Activated CD8-positive, alpha-beta T cell treated with anti-CD3 and anti-CD28 coated beads, Interleukin-2, amount 10 ng/mL, durations not matched to agents 7 days and 5 days (primary cell): ENCODE measurements at regions of chr3 and their contacts with region 1.

Region 1: GRCh38 chr3:50568947-50569749 is at the start of gene HEMK1:
- DNase-seq: peak; percentile 98
- ATAC-seq: peak; percentile 46
- H3K4me3 Mint-ChIP-seq: peak within 1 kb of the TSS; percentile 95
- H3K27ac Mint-ChIP-seq: peak within 1 kb of the TSS; percentile 97
- H3K4me1 Mint-ChIP-seq: peaks cover 79% of the 10 kb centered on the region
- H3K27me3 Mint-ChIP-seq: peaks cover 2% of the 10 kb centered on the region
- total RNA-seq, gene HEMK1: 83.3 to 86.0 TPM

Region 2: DNA sequence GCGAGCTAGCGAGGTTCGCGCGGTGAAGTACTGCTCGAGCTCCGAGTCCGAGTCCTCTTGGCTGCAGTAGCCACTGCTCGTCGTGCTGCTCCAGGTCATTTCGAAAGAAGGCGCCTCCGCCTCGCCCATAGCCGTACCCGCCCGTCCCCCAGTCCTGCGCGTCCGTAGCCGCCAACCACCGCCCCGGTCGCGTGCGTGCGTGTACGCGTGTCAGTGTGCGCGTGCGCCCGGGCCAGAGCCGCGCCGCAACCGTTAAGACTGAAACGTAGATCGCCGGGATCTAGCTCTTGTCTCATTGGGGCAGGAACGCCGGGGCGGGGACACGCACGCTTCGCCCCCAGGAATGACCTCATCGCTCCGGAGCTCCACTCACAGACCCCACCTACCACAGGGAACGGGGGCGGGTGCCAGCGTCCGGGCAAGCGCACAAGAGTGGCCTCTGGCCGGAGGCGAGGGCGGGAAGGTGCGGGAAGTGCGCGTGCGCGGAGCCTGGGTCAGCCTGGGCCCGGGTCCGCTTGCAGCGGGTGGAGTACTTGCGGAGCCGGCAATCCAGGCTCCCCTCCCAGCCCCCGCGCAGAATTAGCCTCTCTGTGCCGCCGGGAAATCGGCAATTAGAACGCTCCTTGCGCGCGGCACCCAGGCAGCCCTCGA is 231.8 kb before region 1 on chr3:
- CTCF ChIA-PET with region 1: interaction called, 4 read pairs
- POLR2A ChIA-PET with region 1: interaction called, 26 read pairs
- DNase-seq: peak; percentile 99
- ATAC-seq: peak; percentile 75
- H3K4me3 Mint-ChIP-seq: peak overlapping the region; percentile 92
- H3K27ac Mint-ChIP-seq: peak overlapping the region; percentile 96
- H3K4me1 Mint-ChIP-seq: peaks cover 56% of the 10 kb centered on the region
- H3K27me3 Mint-ChIP-seq: no peaks in the 10 kb centered on the region

Region 3: GRCh38 chr3:50388016-50388719 is 181.0 kb before region 1 on chr3:
- CTCF ChIA-PET with region 1: no interaction called
- POLR2A ChIA-PET with region 1: no interaction called
- DNase-seq: no peak
- ATAC-seq: no peak
- H3K4me3 Mint-ChIP-seq: no peak overlapping the region
- H3K27ac Mint-ChIP-seq: no peak overlapping the region
- H3K4me1 Mint-ChIP-seq: peaks cover 13% of the 10 kb centered on the region
- H3K27me3 Mint-ChIP-seq: no peaks in the 10 kb centered on the region

Region 4: DNA sequence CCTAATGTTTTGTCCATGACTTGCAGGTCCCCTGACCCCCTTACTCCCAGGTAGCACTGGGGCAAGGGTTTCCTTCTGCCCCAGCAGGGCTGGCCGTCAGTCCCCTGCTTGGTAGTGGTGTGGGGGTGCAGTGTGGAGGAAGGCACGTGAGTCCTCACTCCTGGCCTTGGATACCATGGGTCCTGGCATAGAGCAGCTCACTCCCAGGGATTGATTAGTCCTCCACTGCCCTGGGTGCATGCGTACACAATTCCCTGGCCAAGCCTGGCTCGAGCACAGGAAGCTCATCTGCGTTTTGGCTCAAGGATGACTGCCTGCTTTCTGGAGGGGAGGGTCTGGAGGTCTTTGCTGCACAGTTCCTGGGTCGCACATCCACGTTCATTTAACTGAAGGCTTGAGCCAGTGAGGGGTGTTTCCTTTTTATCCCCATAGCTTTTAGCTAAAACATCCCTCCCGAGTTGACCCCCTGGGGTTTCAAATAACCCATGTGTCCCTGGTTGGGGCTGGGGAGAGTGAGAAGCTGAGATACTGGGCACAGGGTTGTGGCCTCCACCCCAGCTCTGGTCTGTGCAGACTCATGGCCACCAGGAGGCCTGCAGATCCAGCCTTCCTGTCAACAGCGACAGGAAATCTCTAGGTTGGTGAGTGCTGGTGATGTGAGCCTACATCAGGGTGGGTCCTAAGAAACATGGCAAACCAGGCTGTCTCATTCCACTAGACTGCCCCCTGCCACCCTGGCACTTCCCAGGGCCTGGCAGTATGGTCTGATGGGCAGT is 11.7 kb after region 1 on chr3:
- CTCF ChIA-PET with region 1: interaction called, 387 read pairs
- POLR2A ChIA-PET with region 1: interaction called, 612 read pairs
- DNase-seq: no peak
- ATAC-seq: peak; percentile 40
- H3K4me3 Mint-ChIP-seq: no peak overlapping the region
- H3K27ac Mint-ChIP-seq: peak overlapping the region; percentile 84
- H3K4me1 Mint-ChIP-seq: peaks cover 94% of the 10 kb centered on the region
- H3K27me3 Mint-ChIP-seq: no peaks in the 10 kb centered on the region

Region 5: GRCh38 chr3:50600841-50601591 is 31.9 kb after region 1 on chr3:
- CTCF ChIA-PET with region 1: interaction called, 1,321 read pairs
- POLR2A ChIA-PET with region 1: interaction called, 1,664 read pairs
- DNase-seq: peak; percentile 91
- ATAC-seq: peak; percentile 61
- H3K4me3 Mint-ChIP-seq: peak overlapping the region; percentile 94
- H3K27ac Mint-ChIP-seq: peak overlapping the region; percentile 97
- H3K4me1 Mint-ChIP-seq: peaks cover 89% of the 10 kb centered on the region
- H3K27me3 Mint-ChIP-seq: no peaks in the 10 kb centered on the region

Region 6: GRCh38 chr3:50652709-50653108 is 83.6 kb after region 1 on chr3:
- CTCF ChIA-PET with region 1: interaction called, 43 read pairs
- POLR2A ChIA-PET with region 1: no interaction called
- DNase-seq: peak; percentile 66
- ATAC-seq: peak; percentile 72
- H3K4me3 Mint-ChIP-seq: no peak overlapping the region
- H3K27ac Mint-ChIP-seq: peak overlapping the region; percentile 21
- H3K4me1 Mint-ChIP-seq: peaks cover 23% of the 10 kb centered on the region
- H3K27me3 Mint-ChIP-seq: no peaks in the 10 kb centered on the region